Left cardiac atrium (tissue), 4 donors: ENCODE measurements at regions of chr1 and their contacts with region 1.

Region 1: GRCh38 chr1:181166377-181167196 is 78.1 kb downstream of the IER5 start:
- DNase-seq: peak; percentile 67
- ATAC-seq: peak; percentile 97

Region 2: GRCh38 chr1:180515864-180516388 is 650.7 kb before region 1 on chr1:
- intact Hi-C with region 1: loop called (anchors 10 kb)
- DNase-seq: peak; percentile 58
- ATAC-seq: peak; percentile 95 to 96

Region 3: DNA sequence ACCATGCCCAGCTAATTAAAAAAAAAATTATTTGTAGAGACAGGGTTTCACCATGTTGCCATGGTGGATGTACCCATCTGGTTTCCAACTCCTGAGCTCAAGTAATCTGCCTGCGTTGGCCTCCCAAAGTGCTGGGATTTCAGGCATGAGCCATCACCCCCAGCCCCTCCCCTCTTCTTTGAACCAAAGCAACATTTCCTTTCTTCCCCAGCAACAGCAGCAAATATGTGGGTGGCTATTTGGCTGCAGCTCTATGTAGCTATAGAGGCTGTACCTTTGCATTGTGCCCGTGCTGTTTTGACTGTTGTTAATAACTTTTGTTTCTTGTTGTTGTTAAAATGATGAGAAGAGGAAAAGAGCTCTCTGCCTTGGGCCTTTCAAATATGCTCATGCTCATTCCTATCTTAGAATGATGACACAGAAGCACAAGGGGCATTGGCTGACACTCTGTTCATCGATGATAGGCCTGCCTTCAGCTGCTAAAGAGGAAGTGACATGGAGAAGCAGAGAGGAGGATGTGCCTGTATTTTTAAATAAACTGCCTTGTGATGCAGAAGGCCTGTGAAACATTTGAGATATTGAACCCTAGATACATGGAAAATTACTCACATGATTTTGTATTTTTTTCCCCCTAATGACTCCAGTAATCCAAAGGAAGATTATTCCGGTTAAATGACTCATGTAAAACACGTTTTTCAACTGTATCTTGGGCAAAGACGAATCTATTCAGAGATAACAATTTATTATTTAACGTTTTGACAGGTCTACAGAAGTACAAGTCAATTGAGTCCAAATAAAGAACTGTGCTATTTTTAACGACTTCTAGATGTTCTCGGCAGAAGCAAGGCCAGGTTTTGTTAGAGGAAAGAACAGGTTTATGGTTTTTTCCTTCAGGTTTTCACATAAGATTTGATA is 555.3 kb before region 1 on chr1:
- intact Hi-C with region 1: no loop called
- DNase-seq: peak; percentile 24
- ATAC-seq: peak; percentile 78 to 88

Region 4: GRCh38 chr1:180881806-180882509 is 284.6 kb before region 1 on chr1:
- intact Hi-C with region 1: loop called (anchors 2 to 5 kb)
- DNase-seq: no peak
- ATAC-seq: peak; percentile 72 to 82

Region 5: DNA sequence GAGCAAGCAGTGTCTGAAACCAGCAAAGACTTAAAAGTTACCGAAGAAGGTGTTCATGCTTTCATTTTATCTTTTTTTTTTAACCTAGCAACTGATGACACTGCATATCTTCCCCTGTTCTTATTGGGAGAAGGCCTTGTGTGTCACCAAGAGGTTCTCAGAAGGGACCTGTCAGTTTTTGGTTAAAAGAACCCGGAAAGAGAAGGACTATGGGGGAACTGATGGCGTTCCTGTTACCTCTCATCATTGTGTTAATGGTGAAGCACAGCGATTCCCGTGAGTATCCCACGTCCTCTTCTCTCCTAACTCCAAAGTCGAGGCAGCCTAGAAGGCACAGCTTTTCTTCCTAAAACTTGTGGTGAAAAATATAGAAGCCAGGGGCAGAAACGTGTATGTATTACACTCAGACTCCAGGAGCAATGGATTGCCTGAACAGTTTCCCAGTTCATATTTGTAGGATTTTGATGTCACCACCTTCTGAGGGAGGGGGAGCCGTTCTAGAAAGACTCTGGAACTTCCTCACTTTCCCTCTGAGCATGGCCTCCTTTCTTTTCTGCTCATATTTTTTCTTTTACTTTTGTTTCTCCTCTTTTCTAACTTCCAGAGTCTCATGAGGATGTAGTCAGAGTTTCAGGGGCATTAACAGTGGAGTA is 132.7 kb before region 1 on chr1 and contains the start of gene MR1:
- intact Hi-C with region 1: loop called in 1 of 2 experiments (anchors 2 kb)
- DNase-seq: no peak
- ATAC-seq: peak; percentile 95
- total RNA-seq, gene MR1: 10.5 to 12.0 TPM